Tibial artery (tissue), 4 donors: ENCODE measurements at regions of chr12 and their contacts with region 1.

Region 1: GRCh38 chr12:76878899-76879709 is at the start of gene CSRP2:
- DNase-seq: peak; percentile 88 to 97
- H3K4me3 ChIP-seq: peak within 1 kb of the TSS; percentile 70 to 92
- H3K27ac ChIP-seq: peak within 1 kb of the TSS; percentile 96 to 98
- H3K4me1 ChIP-seq: peaks cover 0 to 50% (median 14%) of the 10 kb centered on the region in 4 donors
- H3K27me3 ChIP-seq: no peaks in the 10 kb centered on the region
- CTCF ChIP-seq: peak; percentile 43 to 55

Region 2: GRCh38 chr12:76746516-76746915 is 132.6 kb before region 1 on chr12:
- intact Hi-C with region 1: no loop called
- DNase-seq: no peak
- H3K4me3 ChIP-seq: no peak overlapping the region
- H3K27ac ChIP-seq: no peak overlapping the region
- H3K4me1 ChIP-seq: no peaks in the 10 kb centered on the region
- H3K27me3 ChIP-seq: no peaks in the 10 kb centered on the region
- CTCF ChIP-seq: no peak

Region 3: DNA sequence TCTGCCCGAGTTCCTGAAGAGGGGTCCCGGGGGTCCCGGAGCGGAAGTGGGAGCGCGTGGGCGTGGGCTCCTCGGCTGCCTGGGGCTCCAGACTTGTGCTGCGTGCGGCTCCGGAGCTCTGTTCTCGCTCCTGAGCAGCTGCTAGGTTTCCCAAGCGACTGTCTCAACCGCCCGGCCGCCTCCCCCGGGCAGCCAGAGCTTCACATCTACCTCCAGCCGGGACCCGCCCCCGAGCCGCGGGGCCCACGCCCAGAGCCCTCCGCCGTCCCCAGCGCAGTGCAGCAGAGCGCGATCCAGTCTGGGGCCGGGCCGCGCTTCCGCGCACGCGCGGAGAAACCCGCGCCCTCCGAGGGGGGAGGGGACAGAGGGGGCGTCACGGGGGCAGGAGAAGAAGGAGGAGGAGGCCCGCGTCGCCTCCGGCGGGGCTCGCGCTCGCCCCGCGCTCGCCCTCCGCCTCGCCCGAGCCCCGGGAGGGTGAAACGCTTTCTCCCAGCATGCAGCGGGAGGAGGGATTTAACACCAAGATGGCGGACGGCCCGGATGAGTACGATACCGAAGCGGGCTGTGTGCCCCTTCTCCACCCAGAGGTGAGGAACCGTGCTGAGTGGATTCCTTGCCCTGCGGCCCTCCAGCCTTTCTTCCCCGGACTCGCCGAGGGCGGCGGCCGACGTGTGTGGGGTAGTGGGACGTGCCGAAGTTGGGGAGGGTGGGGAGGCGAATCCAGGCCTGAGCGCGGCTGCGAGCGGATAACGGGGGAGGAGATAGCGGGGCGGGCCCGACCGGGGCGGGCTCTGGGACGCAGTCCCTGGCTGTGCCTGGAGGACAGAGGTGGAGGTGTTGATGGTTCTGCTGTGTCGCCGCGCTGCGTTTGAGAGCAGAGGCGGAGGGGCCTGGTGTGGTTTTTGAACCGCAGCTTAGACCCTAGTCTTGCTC is 115.1 kb before region 1 on chr12 and contains the start of gene ZDHHC17:
- intact Hi-C with region 1: loop called (anchors 5 kb)
- DNase-seq: peak; percentile 90 to 95
- H3K4me3 ChIP-seq: peak within 1 kb of the TSS; percentile 69 to 74
- H3K27ac ChIP-seq: peak within 1 kb of the TSS; percentile 94 to 95
- H3K4me1 ChIP-seq: peaks cover 0 to 33% (median 9%) of the 10 kb centered on the region in 4 donors
- H3K27me3 ChIP-seq: no peaks in the 10 kb centered on the region
- CTCF ChIP-seq: no peak

Region 4: GRCh38 chr12:76804435-76804976 is 74.6 kb before region 1 on chr12:
- intact Hi-C with region 1: no loop called
- DNase-seq: no peak
- H3K4me3 ChIP-seq: no peak overlapping the region
- H3K27ac ChIP-seq: no peak overlapping the region
- H3K4me1 ChIP-seq: peaks cover 0 to 5% (median 0%) of the 10 kb centered on the region in 4 donors
- H3K27me3 ChIP-seq: no peaks in the 10 kb centered on the region
- CTCF ChIP-seq: no peak

Region 5: GRCh38 chr12:76909290-76909689 is 30.2 kb after region 1 on chr12:
- intact Hi-C with region 1: no loop called
- DNase-seq: no peak
- H3K4me3 ChIP-seq: no peak overlapping the region
- H3K27ac ChIP-seq: peak overlapping the region in 1 of 2 donors; percentile 30
- H3K4me1 ChIP-seq: peaks cover 0 to 75% (median 24%) of the 10 kb centered on the region in 4 donors
- H3K27me3 ChIP-seq: no peaks in the 10 kb centered on the region
- CTCF ChIP-seq: no peak

Region 6: DNA sequence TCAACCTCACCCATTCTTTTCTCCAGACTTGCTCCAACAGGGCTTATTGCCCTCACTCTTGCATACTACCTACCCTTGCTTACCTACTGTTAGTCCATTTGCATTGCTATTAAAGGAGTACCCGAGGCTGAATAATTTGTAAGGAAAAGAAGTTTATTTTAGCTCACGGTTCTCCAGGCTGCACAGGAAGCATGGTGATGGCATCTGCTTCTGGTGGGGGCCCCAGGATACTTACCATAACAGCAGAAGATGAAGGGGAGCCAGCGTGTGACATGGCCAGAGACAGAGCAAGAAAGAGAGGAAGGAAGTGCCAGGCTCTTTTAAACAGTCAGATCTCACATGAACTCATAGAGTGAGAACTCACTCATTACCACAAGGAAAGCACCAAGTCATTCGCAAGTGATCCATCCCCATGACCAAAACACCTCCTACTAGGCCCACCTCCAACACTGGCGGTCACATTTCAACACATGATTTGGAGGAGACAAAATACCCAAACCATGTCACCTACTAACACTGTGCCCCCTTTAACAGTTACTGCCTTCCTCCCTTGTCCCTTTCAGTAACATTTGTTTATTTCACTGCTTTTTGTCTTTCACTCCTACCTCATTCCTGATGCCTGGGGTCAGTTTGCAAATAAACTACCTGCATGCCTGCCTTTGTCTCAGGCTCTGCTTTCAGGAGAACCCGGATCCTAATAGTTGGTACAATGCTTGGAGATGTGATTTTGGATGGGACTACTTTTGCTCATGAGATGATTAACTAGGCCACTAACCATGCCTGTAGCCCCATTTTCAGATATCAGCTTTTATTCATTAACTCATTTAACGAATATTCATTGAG is 41.3 kb after region 1 on chr12:
- intact Hi-C with region 1: loop called (anchors 5 kb)
- DNase-seq: no peak
- H3K4me3 ChIP-seq: no peak overlapping the region
- H3K27ac ChIP-seq: peak overlapping the region; percentile 74 to 78
- H3K4me1 ChIP-seq: peaks cover 0 to 82% (median 30%) of the 10 kb centered on the region in 4 donors
- H3K27me3 ChIP-seq: no peaks in the 10 kb centered on the region
- CTCF ChIP-seq: no peak